ENCODE measurements at regions of chr16 and their contacts with region 1.

Region 1: DNA sequence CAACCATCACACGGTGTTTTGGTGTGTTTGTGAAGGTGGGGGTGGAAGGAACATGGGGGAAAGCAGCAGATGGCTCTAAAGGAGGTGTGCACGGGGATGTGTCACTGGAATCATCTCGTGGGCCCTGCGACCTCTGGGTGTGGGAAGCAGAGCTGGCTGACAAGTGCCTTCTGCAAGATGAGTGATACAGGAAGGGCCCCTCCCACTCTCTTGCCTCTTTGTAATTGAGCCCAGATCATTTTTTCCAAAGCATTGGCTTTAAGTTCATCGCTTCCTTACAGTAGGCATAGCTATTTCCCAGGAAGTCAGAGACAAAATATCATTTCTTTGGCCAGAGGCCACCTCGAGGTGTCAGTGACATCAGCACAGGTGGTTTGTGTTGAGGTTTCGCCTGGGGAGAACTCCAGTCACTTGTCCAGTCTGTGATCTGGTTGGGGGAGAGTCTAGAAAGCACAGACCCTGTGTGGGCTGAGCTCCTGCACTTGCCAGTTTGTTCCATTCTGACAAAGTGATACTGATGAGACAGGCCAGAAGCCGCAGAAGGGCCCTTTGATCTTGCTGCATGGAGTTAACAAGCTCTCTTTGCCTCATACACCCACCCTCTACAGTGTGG is 20.6 kb upstream of the SNTB2 start:
- DNase-seq: peak; percentile 83
- H3K4me3 Mint-ChIP-seq: peak overlapping the region; percentile 70
- H3K27ac Mint-ChIP-seq: peak overlapping the region; percentile 91
- H3K4me1 Mint-ChIP-seq: peaks cover 45% of the 10 kb centered on the region
- H3K27me3 Mint-ChIP-seq: no peaks in the 10 kb centered on the region

Region 2: GRCh38 chr16:68093816-68094613 is 1072.3 kb before region 1 on chr16:
- intact Hi-C with region 1: loop called (anchors 2 kb)
- DNase-seq: peak; percentile 62
- H3K4me3 Mint-ChIP-seq: peak overlapping the region; percentile 58
- H3K27ac Mint-ChIP-seq: peak overlapping the region; percentile 84
- H3K4me1 Mint-ChIP-seq: peaks cover 59% of the 10 kb centered on the region
- H3K27me3 Mint-ChIP-seq: no peaks in the 10 kb centered on the region

Region 3: GRCh38 chr16:68756250-68756915 is 409.9 kb before region 1 on chr16:
- intact Hi-C with region 1: loop called (anchors 2 kb)
- DNase-seq: peak; percentile 86
- H3K4me3 Mint-ChIP-seq: peak overlapping the region; percentile 45
- H3K27ac Mint-ChIP-seq: peak overlapping the region; percentile 99
- H3K4me1 Mint-ChIP-seq: peaks cover 54% of the 10 kb centered on the region
- H3K27me3 Mint-ChIP-seq: no peaks in the 10 kb centered on the region

Region 4: DNA sequence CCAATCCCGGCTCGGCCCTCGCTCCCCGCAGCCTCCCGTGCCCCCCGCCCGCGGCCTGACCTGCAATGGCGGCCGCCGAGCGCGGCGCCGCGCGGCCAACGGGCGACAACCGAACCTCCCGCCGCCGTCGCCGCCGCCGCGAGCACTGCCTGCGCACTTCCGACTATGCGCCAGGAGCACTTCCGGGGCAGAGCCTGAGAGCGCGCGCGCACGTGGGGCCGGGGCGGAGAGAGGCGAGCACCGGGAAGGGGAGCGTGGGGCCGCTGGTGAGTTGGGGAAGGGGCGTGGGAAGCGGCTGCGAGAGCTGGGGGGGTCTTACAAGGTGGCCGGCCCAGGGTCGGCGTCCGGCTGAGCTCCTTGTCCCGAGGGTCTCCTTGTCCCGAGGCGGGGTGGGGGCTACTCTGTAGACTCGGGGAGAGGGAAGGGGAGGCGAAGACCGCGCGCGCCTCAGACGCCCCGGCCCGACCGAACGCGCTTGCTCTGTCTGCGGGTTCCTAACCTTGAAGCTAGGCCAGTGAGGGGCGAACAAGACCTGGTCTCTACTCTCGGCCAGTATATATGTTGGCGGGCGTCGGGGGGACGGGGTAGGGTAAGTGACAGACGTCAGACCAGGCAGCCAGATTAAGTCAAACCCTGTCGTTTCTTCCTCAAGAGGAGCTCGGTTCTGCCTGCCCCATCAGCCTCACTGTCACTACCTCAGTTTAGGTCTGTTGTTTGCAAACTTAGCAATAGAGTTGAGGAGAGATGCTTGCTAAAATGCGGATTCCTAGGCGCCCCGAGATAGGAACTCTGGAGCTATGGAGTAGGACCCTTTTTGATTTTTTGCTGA is 33.7 kb before region 1 on chr16 and contains the starts of genes CHTF8 and UTP4:
- intact Hi-C with region 1: loop called (anchors 1 kb)
- DNase-seq: peak; percentile 97
- H3K4me3 Mint-ChIP-seq: peak within 1 kb of the TSS; percentile 90
- H3K27ac Mint-ChIP-seq: peak within 1 kb of the TSS; percentile 93
- H3K4me1 Mint-ChIP-seq: peaks cover 50% of the 10 kb centered on the region
- H3K27me3 Mint-ChIP-seq: no peaks in the 10 kb centered on the region
- total RNA-seq, gene CHTF8: 124 and 138 TPM in 2 replicates
- total RNA-seq, gene UTP4: 126 and 131 TPM in 2 replicates

Region 5: DNA sequence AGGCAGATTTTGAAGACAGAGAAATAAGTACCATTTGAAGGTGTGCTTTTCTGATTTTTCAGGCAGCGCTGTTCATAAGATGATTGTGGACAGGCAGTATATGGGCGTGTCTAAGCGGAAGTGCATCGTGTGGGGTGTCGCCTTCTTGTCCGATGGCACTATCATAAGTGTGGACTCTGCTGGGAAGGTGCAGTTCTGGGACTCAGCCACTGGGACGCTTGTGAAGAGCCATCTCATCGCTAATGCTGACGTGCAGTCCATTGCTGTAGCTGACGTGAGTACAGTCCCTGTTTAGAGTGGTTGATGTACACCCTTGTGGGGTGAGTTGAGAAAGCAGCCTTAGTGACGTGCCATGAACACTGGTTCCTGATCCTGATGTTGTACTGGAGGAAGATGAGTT is 23.2 kb before region 1 on chr16:
- intact Hi-C with region 1: no loop called
- DNase-seq: no peak
- H3K4me3 Mint-ChIP-seq: no peak overlapping the region
- H3K27ac Mint-ChIP-seq: no peak overlapping the region
- H3K4me1 Mint-ChIP-seq: peaks cover 6% of the 10 kb centered on the region
- H3K27me3 Mint-ChIP-seq: no peaks in the 10 kb centered on the region

Region 6: GRCh38 chr16:69186642-69187445 is 20.5 kb after region 1 on chr16 and contains the start of gene SNTB2:
- intact Hi-C with region 1: loop called (anchors 1 kb)
- DNase-seq: peak; percentile 97
- H3K4me3 Mint-ChIP-seq: peak within 1 kb of the TSS; percentile 96
- H3K27ac Mint-ChIP-seq: peak within 1 kb of the TSS; percentile 98
- H3K4me1 Mint-ChIP-seq: peaks cover 47% of the 10 kb centered on the region
- H3K27me3 Mint-ChIP-seq: no peaks in the 10 kb centered on the region
- total RNA-seq, gene SNTB2: 21.4 and 23.3 TPM in 2 replicates

Region 7: DNA sequence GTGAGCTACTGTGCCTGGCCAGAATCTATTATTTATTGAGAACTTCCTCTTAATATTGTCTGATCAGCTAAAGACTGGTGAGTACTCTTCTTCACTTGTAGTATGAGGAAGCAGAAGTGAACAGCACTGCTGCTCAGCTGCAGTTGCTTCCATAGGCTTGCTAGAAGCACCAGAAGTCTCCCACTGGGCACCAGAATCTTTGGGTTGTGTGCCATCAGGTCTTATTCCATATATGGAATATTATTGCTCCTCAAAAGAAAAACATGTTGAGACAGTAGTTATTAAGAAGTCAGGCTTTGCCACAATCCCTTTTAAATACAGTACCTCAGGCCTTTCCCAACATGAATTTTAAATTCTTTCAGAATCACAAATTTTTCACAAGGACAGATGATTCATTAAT is 37.8 kb after region 1 on chr16:
- intact Hi-C with region 1: loop called (anchors 1 kb)
- DNase-seq: no peak
- H3K4me3 Mint-ChIP-seq: no peak overlapping the region
- H3K27ac Mint-ChIP-seq: peak overlapping the region; percentile 71
- H3K4me1 Mint-ChIP-seq: peaks cover 11% of the 10 kb centered on the region
- H3K27me3 Mint-ChIP-seq: no peaks in the 10 kb centered on the region

Region 8: DNA sequence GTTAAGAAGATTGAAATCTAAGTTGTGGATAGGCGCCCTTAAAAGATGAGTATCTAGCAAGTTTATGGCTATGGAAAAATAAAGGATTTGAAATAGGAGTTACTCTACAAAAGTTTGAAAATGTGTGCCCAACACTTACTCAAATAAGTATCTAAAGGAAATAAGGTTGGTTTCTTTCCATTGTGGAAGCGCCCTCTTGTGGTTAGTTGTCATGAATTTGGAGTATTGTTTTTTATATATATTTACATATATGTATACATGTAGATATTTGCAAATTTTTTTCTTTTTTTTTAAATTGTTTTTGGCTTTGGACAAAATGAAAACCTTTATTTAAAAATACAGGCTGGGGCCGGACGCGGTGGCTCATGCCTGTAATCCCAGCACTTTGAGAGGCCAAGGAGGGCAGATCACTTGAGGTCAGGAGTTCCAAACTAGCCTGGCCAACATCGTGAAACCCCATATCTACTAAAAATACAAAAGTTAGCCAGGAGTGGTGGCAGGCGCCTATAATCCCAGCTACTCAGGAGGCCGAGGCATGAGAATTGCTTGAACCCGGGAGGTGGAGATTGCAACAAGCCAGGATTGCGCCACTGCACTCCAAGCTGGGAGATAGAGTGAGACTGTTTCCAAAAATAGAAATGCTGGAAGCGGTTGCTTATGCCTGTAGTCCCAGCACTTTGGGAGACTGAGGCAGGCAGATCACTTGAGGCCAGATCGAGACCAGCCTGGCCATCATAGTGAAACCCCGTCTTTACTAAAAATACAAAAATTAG is 120.8 kb after region 1 on chr16:
- intact Hi-C with region 1: loop called (anchors 1 kb)
- DNase-seq: peak; percentile 84
- H3K4me3 Mint-ChIP-seq: no peak overlapping the region
- H3K27ac Mint-ChIP-seq: no peak overlapping the region
- H3K4me1 Mint-ChIP-seq: no peaks in the 10 kb centered on the region
- H3K27me3 Mint-ChIP-seq: no peaks in the 10 kb centered on the region

Region 9: GRCh38 chr16:70428178-70428998 is 1262.1 kb after region 1 on chr16:
- intact Hi-C with region 1: no loop called
- DNase-seq: peak; percentile 83
- H3K4me3 Mint-ChIP-seq: peak overlapping the region; percentile 56
- H3K27ac Mint-ChIP-seq: peak overlapping the region; percentile 67
- H3K4me1 Mint-ChIP-seq: peaks cover 56% of the 10 kb centered on the region
- H3K27me3 Mint-ChIP-seq: no peaks in the 10 kb centered on the region